ENCODE measurements at regions of chr13 and their contacts with region 1.

Region 1: DNA sequence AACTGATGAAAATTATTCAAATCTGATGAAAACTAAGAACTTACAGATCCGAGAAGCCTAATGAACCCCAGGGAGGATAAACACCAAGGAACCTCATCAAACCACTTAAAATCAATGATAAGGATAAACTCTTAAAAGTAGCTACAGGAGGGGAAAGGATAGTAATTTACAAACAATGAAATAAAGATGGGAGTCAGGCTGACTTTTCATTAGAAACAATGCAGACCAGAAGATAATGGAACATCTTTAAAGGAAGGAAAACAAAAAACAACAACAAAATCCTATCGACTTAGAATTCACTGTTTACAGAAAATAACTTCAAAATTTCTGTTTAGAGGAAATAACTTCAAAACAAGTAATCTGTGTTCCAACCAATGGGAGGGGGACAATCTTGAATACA is 73.4 kb downstream of the ZDHHC20 start:
- DNase-seq: no peak
- CTCF ChIP-seq: no peak

Region 2: DNA sequence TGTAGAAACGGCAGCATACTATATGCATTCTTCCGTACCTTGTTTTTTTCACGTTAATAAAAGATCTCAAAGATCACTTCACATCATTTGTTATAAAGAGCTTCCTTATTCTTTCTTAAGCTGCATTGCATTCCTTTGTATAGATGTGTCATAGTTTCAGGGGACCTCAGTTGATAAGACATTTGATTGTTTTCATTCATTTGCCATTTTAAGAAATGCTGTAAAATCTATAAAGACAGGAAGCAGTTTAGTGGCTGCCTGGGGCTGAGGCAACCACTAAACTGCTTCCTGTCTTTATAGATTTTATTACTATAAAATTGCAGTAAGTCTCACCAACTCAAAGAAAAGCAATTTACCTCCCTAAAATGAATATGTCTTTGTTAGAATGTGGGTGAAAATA is 14.0 kb after region 1 on chr13:
- CTCF ChIA-PET with region 1: interaction called, 10 read pairs
- POLR2A ChIA-PET with region 1: no interaction called
- DNase-seq: no peak
- CTCF ChIP-seq: no peak

Measured in GM10248 (cell line).